ENCODE measurements at regions of chr15 and their contacts with region 1.

Region 1: DNA sequence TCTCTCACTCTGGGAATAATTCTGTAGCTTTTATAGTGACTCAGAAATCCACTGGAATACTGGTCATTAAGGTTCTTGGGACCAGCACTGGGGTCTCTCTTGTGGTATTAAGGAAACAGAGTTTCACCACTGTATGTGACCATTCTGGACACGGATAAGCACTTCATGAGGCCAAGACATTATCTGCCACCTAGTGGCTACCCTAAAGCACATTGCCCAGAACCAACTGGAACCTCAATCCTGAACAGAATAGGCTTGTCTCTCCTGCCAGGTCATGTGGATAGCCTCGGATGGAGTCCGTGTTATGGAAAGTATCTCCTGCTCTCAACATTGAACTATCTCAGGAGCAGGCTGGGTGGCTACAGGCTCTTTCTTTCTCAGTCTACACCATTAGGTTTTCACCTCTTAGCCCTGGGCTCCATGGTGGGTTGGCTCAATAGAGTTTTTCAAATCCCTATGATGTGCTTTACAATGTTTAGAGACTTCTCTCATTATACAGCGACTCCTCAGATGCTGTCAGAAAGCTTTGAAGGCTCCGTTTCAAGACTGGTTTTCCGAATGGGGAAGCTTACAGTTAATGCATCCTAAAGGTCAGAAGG is 167.6 kb upstream of the ST8SIA2 start:
- DNase-seq: peak; percentile 21
- CTCF ChIP-seq: peak; percentile 32

Region 2: GRCh38 chr15:92097474-92098178 is 128.5 kb before region 1 on chr15:
- CTCF ChIA-PET with region 1: interaction called, 21 read pairs
- POLR2A ChIA-PET with region 1: no interaction called
- DNase-seq: peak; percentile 70
- CTCF ChIP-seq: peak; percentile 80

Measured in GM10248 (cell line).